Right ventricle myocardium inferior (tissue), 1 donor: ENCODE measurements at regions of chr6 and their contacts with region 1.

Region 1: GRCh38 chr6:128882991-128883611 is at the start of gene LAMA2:
- DNase-seq: peak; percentile 94
- ATAC-seq: peak; percentile 99
- total RNA-seq, gene LAMA2: 119 TPM

Region 2: GRCh38 chr6:129340983-129341382 is 457.9 kb after region 1 on chr6:
- intact Hi-C with region 1: loop called (anchors 10 kb)
- DNase-seq: no peak
- ATAC-seq: peak; percentile 38